ENCODE measurements at regions of chr19 and their contacts with region 1.

Region 1: GRCh38 chr19:1315470-1316231 is 30.0 kb downstream of the EFNA2 start:
- DNase-seq: peak; percentile 73
- H3K4me3 ChIP-seq: peak overlapping the region; percentile 30
- H3K27ac ChIP-seq: no peak overlapping the region
- H3K4me1 ChIP-seq: peaks cover 8% of the 10 kb centered on the region
- H3K27me3 ChIP-seq: peaks cover 18% of the 10 kb centered on the region
- CTCF ChIP-seq: peak; percentile 51

Region 2: GRCh38 chr19:1383311-1384084 is 67.8 kb after region 1 on chr19 and contains the start of gene NDUFS7:
- intact Hi-C with region 1: loop called (anchors 5 kb)
- DNase-seq: peak; percentile 90
- H3K4me3 ChIP-seq: peak within 1 kb of the TSS; percentile 99
- H3K27ac ChIP-seq: peak within 1 kb of the TSS; percentile 78
- H3K4me1 ChIP-seq: peaks cover 6% of the 10 kb centered on the region
- H3K27me3 ChIP-seq: no peaks in the 10 kb centered on the region
- CTCF ChIP-seq: no peak
- total RNA-seq, gene NDUFS7: 192 to 244 TPM